Endothelial cell of umbilical vein (primary cell): ENCODE measurements at regions of chr17 and their contacts with region 1.

Region 1: GRCh38 chr17:41648411-41649195 is 24.2 kb upstream of the KRT17 start:
- DNase-seq: peak; percentile 78
- H3K4me3 ChIP-seq: peak overlapping the region in 1 of 3 experiments; percentile 25
- H3K27ac ChIP-seq: no peak overlapping the region
- H3K4me1 ChIP-seq: peaks cover 7% of the 10 kb centered on the region
- H3K27me3 ChIP-seq: no peaks in the 10 kb centered on the region
- CTCF ChIP-seq: peak; percentile 96 to 98
- POLR2A ChIP-seq: no peak

Region 2: GRCh38 chr17:40854159-40854814 is 794.3 kb before region 1 on chr17:
- CTCF ChIA-PET with region 1: interaction called, 41 read pairs
- POLR2A ChIA-PET with region 1: no interaction called
- dilution Hi-C with region 1: no loop called
- intact Hi-C with region 1: loop called (anchors 1 kb)
- DNase-seq: peak; percentile 59
- H3K4me3 ChIP-seq: no peak overlapping the region
- H3K27ac ChIP-seq: no peak overlapping the region
- H3K4me1 ChIP-seq: peaks cover 8% of the 10 kb centered on the region
- H3K27me3 ChIP-seq: peaks cover 2 to 5% of the 10 kb centered on the region in 2 experiments
- CTCF ChIP-seq: no peak
- POLR2A ChIP-seq: no peak

Region 3: GRCh38 chr17:40909351-40909750 is 739.3 kb before region 1 on chr17:
- CTCF ChIA-PET with region 1: interaction called, 10 read pairs
- POLR2A ChIA-PET with region 1: no interaction called
- dilution Hi-C with region 1: no loop called
- intact Hi-C with region 1: loop called (anchors 1 kb)
- DNase-seq: peak; percentile 90
- H3K4me3 ChIP-seq: no peak overlapping the region
- H3K27ac ChIP-seq: no peak overlapping the region
- H3K4me1 ChIP-seq: peaks cover 13% of the 10 kb centered on the region
- H3K27me3 ChIP-seq: peaks cover 0 to 3% of the 10 kb centered on the region in 2 experiments
- CTCF ChIP-seq: peak; percentile 75 to 77
- POLR2A ChIP-seq: no peak

Region 4: DNA sequence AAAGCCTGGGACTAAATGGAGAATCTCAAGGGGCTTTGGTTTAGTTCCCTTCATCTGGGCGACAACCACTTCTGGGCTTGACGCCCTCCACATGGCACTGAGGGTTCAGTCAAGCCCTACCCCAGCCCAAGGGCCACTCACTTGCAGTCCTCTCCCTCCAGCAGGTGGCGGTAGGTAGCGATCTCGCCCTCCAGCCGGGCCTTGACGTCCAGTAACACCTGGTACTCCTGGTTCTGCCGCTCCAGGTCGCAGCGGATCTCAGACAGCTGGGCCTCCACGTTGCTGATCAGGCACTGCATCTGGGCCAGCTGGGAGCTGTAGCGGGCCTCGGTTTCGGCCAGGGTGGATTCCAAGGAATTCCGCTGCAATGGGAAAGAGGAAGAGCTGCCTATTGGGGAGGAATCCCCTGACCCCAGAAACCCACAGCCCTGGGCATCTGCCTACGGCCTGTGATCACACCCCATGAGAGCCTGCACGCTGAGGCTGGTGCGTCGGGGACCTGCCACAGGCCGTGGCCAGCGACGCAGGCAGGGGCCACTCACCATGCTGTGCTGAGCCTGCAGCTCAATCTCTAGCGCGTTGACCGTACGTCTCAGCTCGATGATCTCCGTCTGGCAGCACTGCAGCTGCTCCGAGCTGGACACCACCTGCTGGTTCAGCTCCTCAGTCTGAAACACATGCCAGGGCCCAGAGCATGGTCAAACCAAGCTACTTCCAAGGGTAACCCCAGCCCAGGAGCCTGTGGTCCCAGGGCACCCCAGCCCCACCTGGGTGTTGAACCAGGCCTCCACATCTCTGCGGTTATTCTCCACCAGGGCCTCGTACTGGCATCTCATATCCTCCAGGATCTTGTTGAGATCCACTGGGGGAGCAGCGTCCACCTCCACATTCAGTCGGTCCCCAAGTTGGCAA is 161.5 kb before region 1 on chr17:
- CTCF ChIA-PET with region 1: interaction called, 21 read pairs
- POLR2A ChIA-PET with region 1: no interaction called
- dilution Hi-C with region 1: no loop called
- intact Hi-C with region 1: loop called (anchors 1 kb)
- DNase-seq: peak; percentile 28
- H3K4me3 ChIP-seq: no peak overlapping the region
- H3K27ac ChIP-seq: no peak overlapping the region
- H3K4me1 ChIP-seq: no peaks in the 10 kb centered on the region
- H3K27me3 ChIP-seq: no peaks in the 10 kb centered on the region
- CTCF ChIP-seq: peak; percentile 65 to 80
- POLR2A ChIP-seq: no peak

Region 5: DNA sequence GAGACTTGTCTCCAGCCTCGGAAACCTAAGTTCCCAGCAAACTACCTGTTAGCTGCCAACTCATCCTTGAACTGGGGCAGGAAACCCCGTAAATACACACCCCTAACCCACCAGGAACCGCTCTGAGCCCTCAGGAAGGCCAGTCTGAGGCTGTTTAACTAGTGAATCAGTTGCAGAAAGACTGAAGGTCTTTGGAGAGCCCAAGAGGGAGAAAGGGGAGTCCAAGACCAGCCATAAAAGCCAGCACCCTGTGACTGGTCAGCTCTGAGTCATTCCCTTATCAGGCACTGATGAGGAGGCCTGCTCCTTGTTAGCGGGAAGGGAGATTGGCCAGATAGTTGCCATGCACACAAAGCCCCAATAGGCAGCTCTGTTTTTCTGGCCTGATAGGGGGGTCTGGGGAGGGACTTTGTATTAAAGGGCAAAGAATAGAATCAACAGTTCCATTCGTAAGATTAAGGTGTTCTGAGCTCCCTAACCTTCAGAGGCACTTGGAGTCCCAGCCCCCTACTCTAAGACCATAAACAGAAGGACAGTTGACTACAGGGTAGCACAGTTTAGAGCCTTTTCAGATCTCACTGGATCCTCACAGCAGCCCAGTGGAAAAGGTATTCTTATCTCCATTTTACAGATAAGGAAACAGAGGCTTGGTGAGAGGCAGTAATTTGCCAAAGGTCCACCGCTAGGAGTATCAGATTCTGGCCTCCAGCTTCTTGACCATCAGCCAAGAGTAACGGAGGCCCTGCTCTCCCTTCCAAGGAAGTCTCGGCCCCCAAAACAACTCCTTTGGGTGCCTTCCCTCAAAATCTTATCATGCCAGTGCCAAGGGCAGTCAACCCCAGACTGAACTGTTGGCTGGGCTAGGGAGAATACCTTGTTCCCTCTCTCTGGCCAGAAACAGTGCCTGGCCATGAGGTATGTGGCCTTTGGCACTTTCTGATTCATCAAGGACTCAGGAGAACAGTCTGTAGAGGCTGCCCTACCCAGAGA is 118.2 kb before region 1 on chr17:
- CTCF ChIA-PET with region 1: interaction called, 10 read pairs
- POLR2A ChIA-PET with region 1: no interaction called
- dilution Hi-C with region 1: no loop called
- intact Hi-C with region 1: no loop called
- DNase-seq: peak; percentile 90
- H3K4me3 ChIP-seq: no peak overlapping the region
- H3K27ac ChIP-seq: peak overlapping the region; percentile 80
- H3K4me1 ChIP-seq: peaks cover 29% of the 10 kb centered on the region
- H3K27me3 ChIP-seq: no peaks in the 10 kb centered on the region
- CTCF ChIP-seq: no peak
- POLR2A ChIP-seq: peak; percentile 62

Region 6: DNA sequence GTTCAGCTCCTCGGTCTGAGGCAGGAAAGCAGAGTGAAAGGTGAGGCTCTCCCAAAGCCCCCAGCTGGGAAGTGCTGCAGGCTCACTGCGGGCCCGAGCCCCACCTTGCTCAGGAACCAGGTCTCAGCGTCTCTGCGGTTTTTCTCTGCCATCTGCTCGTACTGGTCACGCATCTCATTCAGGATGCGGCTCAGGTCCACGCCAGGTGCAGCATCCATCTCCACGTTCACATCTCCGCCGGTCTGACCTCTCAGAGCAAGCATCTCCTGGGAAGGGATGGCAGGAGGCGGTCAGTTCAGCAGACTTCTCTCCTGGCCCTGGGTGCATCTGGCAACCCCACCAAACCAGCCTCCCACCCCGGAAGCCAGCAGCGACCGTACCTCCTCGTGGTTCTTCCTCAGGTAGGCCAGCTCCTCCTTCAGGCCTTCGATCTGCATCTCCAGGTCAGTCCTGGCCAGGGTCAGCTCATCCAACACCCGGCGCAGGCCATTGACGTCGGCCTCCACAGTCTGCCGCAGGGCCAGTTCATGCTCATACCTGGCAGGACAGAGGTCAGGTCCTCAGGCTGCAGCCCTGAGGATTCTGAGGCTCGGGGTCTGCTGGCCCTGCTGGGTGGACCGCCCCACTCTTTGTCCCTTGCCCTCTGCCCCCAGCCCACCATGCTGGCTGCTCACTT is 37.5 kb before region 1 on chr17:
- CTCF ChIA-PET with region 1: interaction called, 4 read pairs
- POLR2A ChIA-PET with region 1: no interaction called
- dilution Hi-C with region 1: no loop called
- intact Hi-C with region 1: loop called (anchors 1 kb)
- DNase-seq: no peak
- H3K4me3 ChIP-seq: no peak overlapping the region
- H3K27ac ChIP-seq: no peak overlapping the region
- H3K4me1 ChIP-seq: no peaks in the 10 kb centered on the region
- H3K27me3 ChIP-seq: no peaks in the 10 kb centered on the region
- CTCF ChIP-seq: no peak
- POLR2A ChIP-seq: no peak

Region 7: GRCh38 chr17:41824086-41824485 is 175.5 kb after region 1 on chr17:
- CTCF ChIA-PET with region 1: no interaction called
- POLR2A ChIA-PET with region 1: no interaction called
- dilution Hi-C with region 1: no loop called
- intact Hi-C with region 1: no loop called
- DNase-seq: no peak
- H3K4me3 ChIP-seq: no peak overlapping the region
- H3K27ac ChIP-seq: no peak overlapping the region
- H3K4me1 ChIP-seq: no peaks in the 10 kb centered on the region
- H3K27me3 ChIP-seq: no peaks in the 10 kb centered on the region
- CTCF ChIP-seq: no peak
- POLR2A ChIP-seq: no peak